ENCODE measurements at regions of chr20 and their contacts with region 1.

Region 1: DNA sequence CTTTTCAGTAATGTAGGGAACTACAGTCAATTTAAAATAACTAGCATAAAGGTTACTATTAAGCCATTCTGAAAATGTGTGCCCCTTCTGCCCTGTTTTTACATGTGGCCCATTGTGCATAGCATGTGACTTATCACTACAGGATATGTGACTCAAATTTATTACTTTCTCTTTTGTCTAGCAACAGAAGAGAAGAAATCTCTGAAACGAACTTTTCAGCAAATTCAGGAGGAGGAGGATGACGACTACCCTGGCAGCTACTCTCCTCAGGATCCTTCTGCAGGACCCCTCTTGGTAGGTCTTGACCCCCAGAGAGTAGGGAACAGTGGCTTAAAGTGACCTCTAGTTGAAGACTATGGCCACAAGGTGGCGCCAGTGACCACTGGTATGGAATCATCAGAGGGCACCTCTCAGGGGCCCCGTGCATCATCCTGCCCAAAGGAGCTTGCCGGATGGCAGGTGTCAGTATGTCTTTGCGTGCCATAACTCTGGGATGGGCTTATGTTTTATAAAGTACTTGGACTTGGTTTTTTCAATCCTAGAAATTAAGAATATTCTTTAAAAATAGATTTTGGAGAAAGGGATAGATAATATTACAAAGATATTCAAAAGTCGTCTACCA is 23.9 kb downstream of the RPRD1B start:
- DNase-seq: no peak
- H3K4me3 ChIP-seq: no peak overlapping the region
- CTCF ChIP-seq: peak; percentile 77

Region 2: DNA sequence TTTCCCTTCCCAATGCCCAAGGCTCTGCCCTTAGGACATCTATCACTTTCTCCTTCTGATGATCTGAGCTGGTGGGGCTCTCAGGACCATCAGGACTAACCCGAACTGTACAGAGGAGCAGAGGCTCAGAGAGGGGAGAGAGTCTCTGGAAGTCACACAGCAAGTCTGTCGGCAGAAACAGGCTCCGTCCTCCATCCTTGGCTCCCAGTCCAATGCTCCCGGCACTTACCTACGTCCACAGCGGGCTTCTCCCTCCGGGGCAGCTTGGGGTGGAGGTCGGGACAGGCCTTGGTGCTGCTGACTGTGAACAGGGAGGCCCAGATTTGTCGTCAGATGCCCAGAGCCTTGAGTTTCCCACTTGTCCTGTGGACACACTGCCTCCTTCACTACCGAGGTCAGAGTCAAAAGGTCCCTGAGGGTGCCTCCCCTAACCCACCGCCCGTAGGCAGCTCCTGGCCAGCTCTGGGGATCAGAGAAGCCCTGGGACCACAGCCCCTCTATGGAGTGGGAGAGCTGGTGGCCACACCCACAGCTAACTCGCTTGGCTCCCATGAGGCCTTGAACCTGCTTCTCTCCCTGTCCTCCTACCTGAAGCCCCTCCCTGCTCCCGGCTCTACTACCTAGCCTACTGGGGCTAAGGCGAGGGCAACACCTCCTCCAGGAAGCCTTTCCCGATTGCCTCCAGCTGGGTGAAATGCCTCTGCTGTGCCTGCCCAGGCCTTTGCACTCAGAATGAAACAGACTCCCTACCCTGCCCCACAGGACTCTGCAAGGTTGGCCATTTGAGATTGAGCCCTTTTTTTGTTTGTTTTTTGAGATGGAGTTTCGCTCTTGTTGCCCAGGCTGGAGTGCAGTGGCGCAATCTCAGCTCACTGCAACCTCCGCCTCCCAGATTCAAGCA is 131.9 kb before region 1 on chr20:
- CTCF ChIA-PET with region 1: no interaction called
- POLR2A ChIA-PET with region 1: no interaction called
- DNase-seq: no peak
- H3K4me3 ChIP-seq: no peak overlapping the region
- CTCF ChIP-seq: no peak

Region 3: DNA sequence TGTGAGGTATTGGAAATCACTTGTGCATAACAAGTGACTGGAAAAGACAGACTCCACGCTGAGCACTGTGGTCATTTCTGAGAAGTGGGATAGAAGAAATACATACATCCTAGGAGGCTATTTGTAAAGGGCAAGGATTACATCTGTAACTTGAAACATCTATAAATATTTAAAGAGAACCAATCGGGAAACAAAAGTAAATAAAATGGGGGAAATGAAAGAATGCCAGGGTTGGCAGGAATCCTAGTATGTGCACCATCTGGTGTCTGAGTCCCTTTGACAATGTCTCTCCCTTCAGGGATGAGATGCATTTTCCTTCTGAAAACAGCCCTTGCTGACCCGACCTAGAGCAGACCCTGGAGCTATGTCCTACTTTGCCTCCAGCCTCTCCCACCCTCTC is 101.4 kb before region 1 on chr20:
- CTCF ChIA-PET with region 1: no interaction called
- POLR2A ChIA-PET with region 1: no interaction called
- DNase-seq: no peak
- H3K4me3 ChIP-seq: no peak overlapping the region
- CTCF ChIP-seq: no peak

Region 4: GRCh38 chr20:38033310-38034107 is 24.0 kb before region 1 on chr20 and contains the starts of genes RPRD1B and TTI1:
- CTCF ChIA-PET with region 1: interaction called, 11 read pairs
- POLR2A ChIA-PET with region 1: no interaction called
- DNase-seq: no peak
- H3K4me3 ChIP-seq: peak within 1 kb of the TSS; percentile 95
- CTCF ChIP-seq: no peak

Region 5: DNA sequence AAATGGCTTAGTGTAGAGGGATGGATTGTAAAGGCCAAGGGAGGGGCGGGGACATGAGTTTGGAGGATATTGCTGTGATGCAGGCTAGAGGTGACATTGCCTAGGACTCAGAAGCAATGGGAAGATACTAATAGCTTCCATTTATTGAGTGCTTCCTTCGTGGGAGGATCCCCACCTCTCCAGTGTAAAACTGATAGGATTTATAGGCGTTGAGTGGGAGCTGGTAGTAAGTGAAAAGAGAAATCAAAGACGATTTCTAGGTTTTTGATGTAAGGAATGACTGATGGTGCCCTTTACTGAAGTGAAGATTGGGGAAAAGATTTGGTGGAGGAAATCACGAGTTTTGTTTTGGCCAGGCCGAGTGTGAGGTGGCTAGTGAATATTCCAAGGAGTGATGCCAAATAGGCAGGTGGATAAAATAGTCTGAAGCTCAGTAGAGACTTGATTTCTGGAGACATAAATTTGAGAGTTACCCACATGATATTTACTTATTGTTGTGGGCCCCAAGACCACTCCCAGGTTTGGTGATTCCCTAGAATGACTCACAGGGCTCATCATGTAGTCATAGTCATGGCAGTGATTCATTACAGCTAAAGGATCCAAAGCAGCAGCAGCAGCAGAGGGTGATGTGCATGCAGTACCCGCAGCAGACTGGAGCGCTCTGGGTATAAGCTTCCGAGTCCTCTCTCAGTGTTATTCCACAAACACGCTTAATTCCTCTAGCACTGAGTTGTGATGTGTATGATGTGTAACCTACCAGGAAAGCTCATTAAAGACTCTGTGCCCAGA is 13.8 kb before region 1 on chr20:
- CTCF ChIA-PET with region 1: interaction called, 78 read pairs
- POLR2A ChIA-PET with region 1: interaction called, 6 read pairs
- DNase-seq: no peak
- H3K4me3 ChIP-seq: no peak overlapping the region
- CTCF ChIP-seq: peak; percentile 12

Region 6: DNA sequence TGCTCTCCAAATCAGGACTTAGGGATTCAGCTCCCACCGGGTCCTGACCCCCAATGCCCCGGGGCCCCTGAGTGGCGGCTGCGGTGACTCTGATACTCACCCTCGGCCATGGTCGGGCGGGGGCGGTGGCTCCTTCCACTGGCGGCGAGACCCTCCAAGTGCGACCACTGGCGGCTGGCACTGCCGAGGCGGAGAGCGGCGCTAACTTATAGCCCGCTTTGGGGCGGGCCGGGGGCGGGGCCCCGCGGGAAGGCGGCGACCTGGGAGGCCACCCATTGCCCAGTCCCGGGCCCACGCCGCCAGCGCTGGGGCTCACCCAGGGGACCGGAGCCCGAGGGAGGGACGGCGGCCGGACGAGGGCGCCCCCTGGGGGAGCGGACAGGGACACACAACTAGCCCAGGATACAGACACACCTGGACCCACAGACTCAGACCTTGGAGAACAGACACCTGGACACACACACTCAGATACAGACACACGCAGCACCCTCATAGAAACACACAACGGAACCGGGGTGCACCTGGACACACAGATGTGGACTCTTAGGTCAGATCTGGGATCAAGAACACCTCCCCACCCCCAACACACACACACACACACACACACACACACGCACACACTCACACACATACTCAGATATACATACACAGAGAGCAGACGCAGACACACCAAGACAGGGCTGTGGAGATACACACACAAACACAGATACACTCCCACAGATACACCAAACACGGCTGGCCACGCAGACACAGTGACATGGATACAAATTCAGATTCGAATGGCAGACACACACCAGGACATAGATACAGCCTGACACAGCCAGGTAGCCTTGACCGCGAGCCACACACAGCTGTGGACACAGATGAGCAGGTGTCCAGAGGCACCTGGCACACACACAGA is 107.9 kb after region 1 on chr20 and contains the start of gene TGM2:
- CTCF ChIA-PET with region 1: interaction called, 23 read pairs
- POLR2A ChIA-PET with region 1: no interaction called
- DNase-seq: no peak
- H3K4me3 ChIP-seq: peak within 1 kb of the TSS; percentile 49
- CTCF ChIP-seq: peak; percentile 84

Region 7: GRCh38 chr20:38196592-38196991 is 139.1 kb after region 1 on chr20:
- CTCF ChIA-PET with region 1: interaction called, 10 read pairs
- POLR2A ChIA-PET with region 1: no interaction called
- DNase-seq: no peak
- H3K4me3 ChIP-seq: no peak overlapping the region
- CTCF ChIP-seq: no peak

Region 8: GRCh38 chr20:38210741-38211140 is 153.3 kb after region 1 on chr20:
- CTCF ChIA-PET with region 1: interaction called, 1,143 read pairs
- POLR2A ChIA-PET with region 1: no interaction called
- DNase-seq: no peak
- H3K4me3 ChIP-seq: no peak overlapping the region
- CTCF ChIP-seq: no peak